Psoas muscle (tissue), 8 donors: ENCODE measurements at regions of chr17 and their contacts with region 1.

Region 1: DNA sequence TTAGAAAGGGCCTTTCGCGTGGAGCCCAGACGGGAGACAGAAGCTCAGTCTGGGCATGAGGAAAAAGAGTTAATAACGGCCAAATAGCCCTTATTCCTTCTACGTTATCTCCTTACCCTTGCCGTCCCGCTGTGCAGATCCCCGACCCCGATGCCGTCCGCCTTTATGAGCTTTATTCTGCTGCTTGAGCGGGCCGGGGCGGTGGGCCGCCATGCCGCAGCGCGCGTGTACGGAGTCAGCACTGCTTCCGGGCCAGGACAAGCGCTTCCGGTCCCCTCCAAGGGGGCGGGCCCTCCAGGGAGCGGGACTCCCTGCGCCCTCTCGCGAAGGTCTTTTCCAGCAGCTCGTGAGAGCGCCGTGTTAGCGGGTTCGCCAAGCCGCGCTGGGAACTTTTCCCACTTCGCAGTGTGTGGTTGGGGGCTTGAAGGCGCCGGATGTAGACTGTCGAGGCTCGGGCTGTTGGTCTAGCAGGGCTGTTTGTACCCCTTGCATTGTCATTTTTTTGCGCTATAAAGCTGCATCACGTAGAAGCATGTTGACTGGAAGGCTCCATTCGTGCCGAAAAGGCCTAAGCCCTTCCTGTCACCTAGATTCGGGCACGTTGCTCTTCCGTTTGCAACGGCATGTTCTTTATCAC is at the start of gene TSR1:
- DNase-seq: peak; percentile 93 to 95
- ATAC-seq: peak; percentile 93 to 96 (median 95)
- H3K4me3 ChIP-seq: peak within 1 kb of the TSS; percentile 79
- H3K27ac ChIP-seq: peak within 1 kb of the TSS; percentile 85
- H3K4me1 ChIP-seq: peaks cover 10% of the 10 kb centered on the region
- H3K27me3 ChIP-seq: no peaks in the 10 kb centered on the region
- CTCF ChIP-seq: no peak
- total RNA-seq, gene TSR1: 36.6 to 64.2 (median 54.7) TPM

Region 2: DNA sequence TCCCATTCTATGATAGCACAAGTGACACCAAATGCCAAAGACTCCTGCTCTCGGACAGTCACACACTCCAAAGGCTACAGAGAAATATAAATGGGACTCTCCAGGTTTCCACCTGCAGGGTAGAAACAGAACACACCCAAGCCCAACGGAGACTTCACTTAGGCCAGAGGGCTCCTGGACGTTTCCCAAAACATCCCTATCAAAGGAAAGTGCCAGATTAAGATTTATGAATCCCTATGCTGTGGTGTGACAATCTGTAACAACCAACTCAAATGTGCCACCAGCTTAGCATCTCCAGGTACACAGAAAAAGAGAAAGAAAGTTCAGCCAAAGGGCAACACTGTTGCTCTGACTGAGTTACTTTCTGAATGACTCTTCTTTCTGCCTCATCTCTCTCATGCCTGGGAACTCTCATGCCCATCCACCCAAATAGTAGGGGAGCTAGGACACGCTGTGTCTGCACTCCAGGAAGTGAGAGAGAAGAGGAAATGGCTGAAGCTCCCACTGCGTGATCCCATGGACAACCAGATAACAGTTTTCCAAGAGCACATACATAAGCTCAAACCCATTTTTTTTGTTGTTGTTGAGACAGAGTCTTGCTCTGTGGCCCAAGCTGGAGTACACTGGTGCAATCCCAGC is 82.4 kb before region 1 on chr17:
- intact Hi-C with region 1: no loop called
- DNase-seq: no peak
- ATAC-seq: no peak
- H3K4me3 ChIP-seq: no peak overlapping the region
- H3K27ac ChIP-seq: no peak overlapping the region
- H3K4me1 ChIP-seq: no peaks in the 10 kb centered on the region
- H3K27me3 ChIP-seq: no peaks in the 10 kb centered on the region
- CTCF ChIP-seq: no peak

Region 3: GRCh38 chr17:2303204-2304188 is 32.8 kb before region 1 on chr17 and contains the starts of genes SMG6 and SRR:
- intact Hi-C with region 1: loop called in 1 of 2 experiments (anchors 2 kb)
- DNase-seq: peak; percentile 95 to 96
- ATAC-seq: peak; percentile 96 to 97 (median 96)
- H3K4me3 ChIP-seq: peak within 1 kb of the TSS; percentile 92
- H3K27ac ChIP-seq: peak within 1 kb of the TSS; percentile 95
- H3K4me1 ChIP-seq: peaks cover 3% of the 10 kb centered on the region
- H3K27me3 ChIP-seq: no peaks in the 10 kb centered on the region
- CTCF ChIP-seq: no peak
- total RNA-seq, gene SMG6: 16.3 to 24.1 (median 19.7) TPM
- total RNA-seq, gene SRR: 3.9 to 9.1 (median 5.4) TPM

Region 4: DNA sequence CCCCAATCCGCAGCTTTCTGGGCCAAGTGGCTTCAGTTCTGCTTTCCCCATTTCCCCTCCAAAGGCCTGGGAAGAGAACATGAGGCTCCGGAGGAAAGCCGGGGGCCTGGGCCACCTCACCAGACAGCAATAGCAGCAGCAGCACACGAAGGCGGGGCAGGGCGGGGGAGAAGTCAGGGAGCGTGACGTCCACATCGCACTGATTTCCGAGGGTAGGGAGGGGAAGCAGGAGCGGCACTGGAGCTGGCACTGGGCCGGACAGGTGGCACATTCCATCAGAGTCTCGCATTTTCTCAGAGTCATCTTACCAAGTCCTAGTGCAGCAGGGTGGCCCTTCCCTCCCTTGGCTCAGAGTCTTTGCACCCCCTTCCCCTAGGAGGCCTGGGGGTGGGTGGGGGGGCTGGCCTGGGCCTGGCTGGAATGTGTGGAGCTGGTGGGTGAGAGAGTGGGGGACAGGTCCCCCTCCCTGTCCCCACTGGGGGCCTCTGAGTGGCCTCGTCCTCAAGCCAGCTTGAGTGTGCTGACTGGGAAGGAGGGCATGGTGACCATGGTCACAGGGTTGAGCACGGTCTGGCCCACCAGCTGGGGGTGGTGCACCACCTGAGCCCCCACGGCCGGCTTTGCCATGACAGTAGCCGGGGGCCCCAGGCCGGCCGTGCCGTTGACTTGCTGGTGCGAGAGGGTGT is 50.2 kb after region 1 on chr17:
- intact Hi-C with region 1: no loop called
- DNase-seq: peak in 1 of 2 donors; percentile 11
- ATAC-seq: no peak
- H3K4me3 ChIP-seq: no peak overlapping the region
- H3K27ac ChIP-seq: peak overlapping the region; percentile 39
- H3K4me1 ChIP-seq: peaks cover 67% of the 10 kb centered on the region
- H3K27me3 ChIP-seq: no peaks in the 10 kb centered on the region
- CTCF ChIP-seq: no peak